ENCODE measurements at regions of chr2 and their contacts with region 1.

Region 1: GRCh38 chr2:167733747-167734146 is 513.6 kb downstream of the STK39 start:
- DNase-seq: peak; percentile 48
- H3K4me3 ChIP-seq: no peak overlapping the region
- H3K27ac ChIP-seq: peak overlapping the region; percentile 31 to 59 (median 40)
- H3K4me1 ChIP-seq: peaks cover 4 to 34% (median 12%) of the 10 kb centered on the region in 4 donors
- H3K27me3 ChIP-seq: no peaks in the 10 kb centered on the region
- CTCF ChIP-seq: no peak
- EP300 ChIP-seq: peak; percentile 57
- POLR2A ChIP-seq: no peak

Region 2: DNA sequence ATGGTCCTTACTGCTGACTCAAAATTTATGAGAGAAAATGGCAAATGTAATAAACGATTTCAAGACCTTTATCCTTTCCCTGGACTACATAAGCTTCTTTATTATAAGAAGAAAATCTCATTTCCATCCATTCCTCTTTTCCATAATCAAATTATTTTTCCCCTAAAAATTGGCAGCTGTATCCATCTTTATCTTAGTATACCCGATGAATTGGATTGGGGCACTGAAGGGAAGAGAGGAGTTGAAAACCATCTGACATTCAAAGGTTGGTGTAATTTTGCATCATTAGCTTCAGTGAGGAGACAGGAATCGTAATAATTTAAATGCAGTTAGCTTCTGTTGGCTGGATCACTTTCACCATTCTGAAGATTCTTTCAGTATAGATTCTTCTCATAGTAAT is 271.4 kb before region 1 on chr2:
- in situ Hi-C with region 1: no loop called
- intact Hi-C with region 1: no loop called
- DNase-seq: no peak
- H3K4me3 ChIP-seq: no peak overlapping the region
- H3K27ac ChIP-seq: no peak overlapping the region
- H3K4me1 ChIP-seq: no peaks in the 10 kb centered on the region
- H3K27me3 ChIP-seq: no peaks in the 10 kb centered on the region
- CTCF ChIP-seq: no peak
- EP300 ChIP-seq: no peak
- POLR2A ChIP-seq: no peak

Region 3: DNA sequence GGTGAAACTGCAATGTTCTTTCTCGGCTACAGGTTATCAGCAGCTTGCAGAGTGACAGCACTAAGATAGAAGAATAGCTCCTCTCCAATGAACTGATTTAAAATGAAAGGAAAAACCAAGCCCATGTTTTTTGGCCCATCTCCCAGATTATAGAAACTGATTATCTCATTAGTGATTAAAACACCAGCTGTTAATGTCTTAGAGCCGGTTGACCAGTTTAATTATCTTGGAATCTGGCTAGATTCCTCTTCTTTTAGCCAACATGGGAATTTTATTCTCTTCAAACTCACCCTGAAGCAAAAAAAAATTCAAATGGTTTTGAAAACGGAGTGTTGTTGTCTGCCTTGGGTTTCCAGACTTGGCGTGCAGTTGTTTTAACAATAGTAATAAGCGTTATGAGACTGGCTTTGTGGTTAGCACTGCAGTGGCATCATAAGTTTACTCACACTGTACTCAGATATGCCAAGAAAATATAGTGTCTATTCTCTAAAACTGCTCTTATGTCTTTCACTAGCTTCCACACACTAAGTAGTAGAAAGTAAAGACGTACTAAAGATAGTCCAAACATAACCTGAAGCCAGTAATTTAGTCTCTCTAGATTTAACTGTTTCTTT is 151.7 kb before region 1 on chr2:
- in situ Hi-C with region 1: no loop called
- intact Hi-C with region 1: no loop called
- DNase-seq: no peak
- H3K4me3 ChIP-seq: no peak overlapping the region
- H3K27ac ChIP-seq: no peak overlapping the region
- H3K4me1 ChIP-seq: peaks cover 0 to 7% (median 3%) of the 10 kb centered on the region in 4 donors
- H3K27me3 ChIP-seq: no peaks in the 10 kb centered on the region
- CTCF ChIP-seq: no peak
- EP300 ChIP-seq: no peak
- POLR2A ChIP-seq: no peak

Region 4: GRCh38 chr2:167924556-167924955 is 190.8 kb after region 1 on chr2:
- in situ Hi-C with region 1: no loop called
- intact Hi-C with region 1: no loop called
- DNase-seq: no peak
- H3K4me3 ChIP-seq: no peak overlapping the region
- H3K27ac ChIP-seq: no peak overlapping the region
- H3K4me1 ChIP-seq: no peaks in the 10 kb centered on the region
- H3K27me3 ChIP-seq: no peaks in the 10 kb centered on the region
- CTCF ChIP-seq: no peak
- EP300 ChIP-seq: no peak
- POLR2A ChIP-seq: no peak

Region 5: GRCh38 chr2:169386722-169387121 is 1653.0 kb after region 1 on chr2:
- in situ Hi-C with region 1: no loop called
- intact Hi-C with region 1: loop called (anchors 5 kb)
- DNase-seq: no peak
- H3K4me3 ChIP-seq: no peak overlapping the region
- H3K27ac ChIP-seq: no peak overlapping the region
- H3K4me1 ChIP-seq: no peaks in the 10 kb centered on the region
- H3K27me3 ChIP-seq: peaks cover 11% of the 10 kb centered on the region
- CTCF ChIP-seq: no peak
- EP300 ChIP-seq: no peak
- POLR2A ChIP-seq: no peak

Measured in transverse colon (tissue), 4 donors.